Breast epithelium (tissue), 4 donors: ENCODE measurements at regions of chr7 and their contacts with region 1.

Region 1: DNA sequence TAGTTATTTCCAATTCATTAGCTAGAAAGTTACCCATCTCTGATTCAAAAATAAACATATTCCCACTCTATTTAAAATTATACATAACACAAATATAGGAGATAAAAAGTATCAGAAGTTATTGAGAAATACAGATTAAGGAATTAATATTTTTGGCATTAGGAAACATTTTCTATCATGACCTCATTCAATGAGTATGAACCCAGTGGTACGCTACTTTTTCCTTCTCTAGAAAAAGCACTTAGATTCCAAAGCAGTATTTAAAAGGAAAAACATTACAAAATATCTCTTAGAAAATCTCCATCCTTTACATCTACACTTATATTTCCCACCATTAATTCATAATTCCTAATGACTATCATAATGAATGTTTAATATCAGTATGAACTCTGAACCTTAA is 240.6 kb upstream of the GNAI1 start:
- DNase-seq: no peak
- H3K4me3 ChIP-seq: no peak overlapping the region
- H3K27ac ChIP-seq: no peak overlapping the region
- H3K4me1 ChIP-seq: no peaks in the 10 kb centered on the region
- H3K27me3 ChIP-seq: no peaks in the 10 kb centered on the region
- CTCF ChIP-seq: no peak
- POLR2A ChIP-seq: no peak

Region 2: GRCh38 chr7:79723833-79724618 is 170.0 kb before region 1 on chr7:
- intact Hi-C with region 1: no loop called
- DNase-seq: no peak
- H3K4me3 ChIP-seq: no peak overlapping the region
- H3K27ac ChIP-seq: no peak overlapping the region
- H3K4me1 ChIP-seq: no peaks in the 10 kb centered on the region
- H3K27me3 ChIP-seq: no peaks in the 10 kb centered on the region
- CTCF ChIP-seq: no peak
- POLR2A ChIP-seq: no peak

Region 3: DNA sequence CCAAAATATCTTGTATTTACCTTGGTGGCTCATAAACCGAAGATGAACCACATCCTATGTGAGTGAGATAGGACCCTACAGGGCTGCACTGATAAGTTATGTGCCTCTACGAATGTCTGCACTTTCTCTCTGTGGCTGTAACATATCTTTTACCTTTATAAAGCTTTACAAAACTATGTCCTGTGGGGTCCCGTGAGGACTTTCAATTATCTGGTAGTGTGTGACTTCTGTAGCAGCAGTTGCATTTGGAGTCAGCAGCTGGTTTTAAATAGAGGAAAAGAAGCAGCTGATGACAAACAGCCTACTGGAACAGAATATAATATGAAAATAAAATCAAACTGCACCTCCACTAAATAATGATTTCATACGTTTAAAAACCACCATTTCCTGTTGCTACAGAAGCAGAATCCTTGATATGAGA is 18.2 kb after region 1 on chr7:
- intact Hi-C with region 1: loop called (anchors 1 kb)
- DNase-seq: no peak
- H3K4me3 ChIP-seq: no peak overlapping the region
- H3K27ac ChIP-seq: no peak overlapping the region
- H3K4me1 ChIP-seq: no peaks in the 10 kb centered on the region
- H3K27me3 ChIP-seq: no peaks in the 10 kb centered on the region
- CTCF ChIP-seq: no peak
- POLR2A ChIP-seq: no peak

Region 4: DNA sequence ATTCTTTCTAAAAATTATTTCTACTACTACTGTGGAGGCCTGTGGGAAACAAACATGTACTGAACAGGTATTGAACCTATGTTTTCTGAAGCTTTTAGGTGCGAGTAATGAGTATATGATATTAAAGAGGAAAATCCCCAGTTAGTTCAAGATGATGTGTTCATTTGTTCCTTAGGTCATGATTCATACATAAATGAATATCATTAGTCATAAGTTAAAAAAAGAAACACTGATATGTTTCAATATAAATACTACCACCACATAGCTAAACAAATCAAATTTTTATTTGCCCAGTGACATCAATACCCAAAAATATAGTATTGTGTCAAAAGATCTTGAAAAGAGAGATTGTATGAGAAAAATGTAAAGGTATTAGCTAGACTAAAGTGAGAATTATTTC is 30.0 kb after region 1 on chr7:
- intact Hi-C with region 1: no loop called
- DNase-seq: no peak
- H3K4me3 ChIP-seq: no peak overlapping the region
- H3K27ac ChIP-seq: no peak overlapping the region
- H3K4me1 ChIP-seq: no peaks in the 10 kb centered on the region
- H3K27me3 ChIP-seq: no peaks in the 10 kb centered on the region
- CTCF ChIP-seq: no peak
- POLR2A ChIP-seq: no peak